ENCODE measurements at regions of chr12 and their contacts with region 1.

Region 1: DNA sequence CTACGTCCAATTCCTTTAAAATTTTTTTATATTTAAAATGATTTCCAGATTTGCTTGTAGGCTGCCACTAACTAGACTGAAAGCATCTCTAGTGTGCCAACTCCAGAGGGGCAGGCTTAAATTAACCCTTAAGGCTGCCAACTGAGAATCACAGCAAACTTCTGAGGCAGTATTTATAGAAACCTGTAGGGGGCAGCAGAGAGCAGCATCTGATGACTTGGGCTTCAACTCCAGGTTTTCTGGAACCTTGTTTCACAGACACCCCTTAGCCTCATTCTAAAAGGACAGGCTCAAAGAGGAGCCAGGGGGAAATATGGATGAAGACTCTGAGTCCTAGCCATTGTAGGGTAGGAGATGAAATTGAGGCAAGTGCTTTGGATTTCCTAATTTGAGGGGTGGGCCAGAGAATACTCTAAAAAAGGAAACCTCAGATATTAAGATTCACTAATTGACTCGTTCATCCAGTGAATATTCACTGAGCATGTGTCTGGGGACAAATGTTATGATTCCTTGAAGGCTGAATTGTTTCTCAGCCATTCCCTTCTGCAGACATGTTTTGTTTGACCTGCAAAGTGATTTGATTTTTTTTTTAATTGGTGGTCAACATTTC is 63.3 kb upstream of the HSPB8 start:
- DNase-seq: peak; percentile 31
- ATAC-seq: peak; percentile 51
- H3K4me3 ChIP-seq: no peak overlapping the region
- H3K27ac ChIP-seq: no peak overlapping the region
- H3K4me1 ChIP-seq: no peaks in the 10 kb centered on the region
- H3K27me3 ChIP-seq: no peaks in the 10 kb centered on the region
- CTCF ChIP-seq: peak; percentile 75
- POLR2A ChIP-seq: no peak
- RAD21 ChIP-seq: peak; percentile 83

Region 2: DNA sequence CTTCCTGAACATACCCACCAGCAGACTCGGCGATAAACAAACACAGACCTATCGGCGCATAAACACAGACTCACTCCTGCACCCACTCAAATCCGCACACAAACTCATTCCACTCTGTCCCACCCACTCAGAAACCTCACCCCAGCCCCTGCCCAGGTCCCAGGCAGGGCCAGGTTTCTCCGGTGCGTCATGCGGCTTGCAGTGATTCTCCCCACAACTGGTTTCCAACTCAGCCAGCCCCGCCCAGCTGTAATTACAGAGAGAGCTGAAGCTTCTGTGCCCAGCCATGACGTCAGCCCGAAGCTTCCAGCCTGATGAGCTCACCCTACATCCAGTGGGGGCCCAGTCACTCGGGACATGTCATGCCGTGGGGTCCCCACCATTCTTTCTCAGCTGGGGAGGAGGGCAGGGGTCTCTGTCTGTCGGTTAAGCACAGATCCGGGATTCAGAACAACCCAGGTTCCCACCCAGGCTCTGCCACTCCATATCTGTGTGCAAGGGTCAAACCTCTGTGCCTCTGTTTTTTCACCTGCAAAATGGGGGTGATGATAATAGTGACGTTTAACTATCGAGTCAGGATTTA is 61.0 kb after region 1 on chr12:
- CTCF ChIA-PET with region 1: no interaction called
- POLR2A ChIA-PET with region 1: no interaction called
- dilution Hi-C with region 1: no loop called
- in situ Hi-C with region 1: no loop called
- intact Hi-C with region 1: loop called (anchors 2 kb)
- DNase-seq: peak; percentile 95
- ATAC-seq: peak; percentile 50
- H3K4me3 ChIP-seq: peak overlapping the region; percentile 14; the same call in 1 of the 2 replicates
- H3K27ac ChIP-seq: no peak overlapping the region
- H3K4me1 ChIP-seq: peaks cover 11% of the 10 kb centered on the region
- H3K27me3 ChIP-seq: peaks cover 2% of the 10 kb centered on the region; the same call in 1 of the 2 replicates
- CTCF ChIP-seq: no peak
- POLR2A ChIP-seq: no peak
- RAD21 ChIP-seq: no peak

Region 3: GRCh38 chr12:119412811-119413794 is 297.7 kb after region 1 on chr12:
- CTCF ChIA-PET with region 1: interaction called, 6 read pairs
- POLR2A ChIA-PET with region 1: no interaction called
- dilution Hi-C with region 1: no loop called
- in situ Hi-C with region 1: no loop called
- intact Hi-C with region 1: loop called (anchors 1 kb)
- DNase-seq: peak; percentile 59
- ATAC-seq: peak; percentile 77
- H3K4me3 ChIP-seq: no peak overlapping the region
- H3K27ac ChIP-seq: no peak overlapping the region
- H3K4me1 ChIP-seq: no peaks in the 10 kb centered on the region
- H3K27me3 ChIP-seq: no peaks in the 10 kb centered on the region
- CTCF ChIP-seq: peak; percentile 81
- POLR2A ChIP-seq: no peak
- RAD21 ChIP-seq: peak; percentile 86